ENCODE measurements at regions of chr6 and their contacts with region 1.

Region 1: GRCh38 chr6:108798670-108799353 is 49.4 kb upstream of the ARMC2 start:
- DNase-seq: peak in 4 of 5 donors; percentile 37 to 71 (median 50)
- ATAC-seq: peak; percentile 40 to 76 (median 72)
- H3K4me3 ChIP-seq: no peak overlapping the region
- H3K27ac ChIP-seq: peak overlapping the region in 1 of 12 donors; percentile 54
- H3K4me1 ChIP-seq: peaks cover 0 to 47% (median 12%) of the 10 kb centered on the region in 12 donors
- H3K27me3 ChIP-seq: no peaks in the 10 kb centered on the region
- CTCF ChIP-seq: no peak
- POLR2A ChIP-seq: no peak

Region 2: DNA sequence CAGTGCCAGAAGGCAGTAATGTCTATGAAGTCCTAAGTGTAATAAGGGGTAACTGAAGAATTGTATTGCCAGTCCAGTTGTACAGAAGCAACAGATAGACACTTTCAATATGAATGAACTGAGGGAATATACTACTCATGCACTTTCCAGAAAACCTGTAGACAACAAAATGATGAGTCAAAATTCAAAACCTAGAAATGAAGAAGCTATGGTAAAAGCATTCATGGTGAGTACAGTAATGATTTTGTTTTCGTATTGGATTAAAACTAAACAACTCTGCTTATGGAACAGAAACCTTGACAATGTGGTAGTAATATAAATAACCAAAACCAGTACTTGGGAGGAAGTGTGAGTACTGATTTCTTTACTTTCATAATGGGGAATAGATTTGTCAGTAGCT is 84.4 kb after region 1 on chr6:
- intact Hi-C with region 1: loop called in 1 of 10 experiments (anchors 10 kb)
- DNase-seq: no peak
- ATAC-seq: no peak
- H3K4me3 ChIP-seq: no peak overlapping the region
- H3K27ac ChIP-seq: peak overlapping the region in 1 of 12 donors; percentile 42
- H3K4me1 ChIP-seq: peaks cover 0 to 21% (median 7%) of the 10 kb centered on the region in 12 donors
- H3K27me3 ChIP-seq: no peaks in the 10 kb centered on the region
- CTCF ChIP-seq: no peak
- POLR2A ChIP-seq: no peak

Region 3: DNA sequence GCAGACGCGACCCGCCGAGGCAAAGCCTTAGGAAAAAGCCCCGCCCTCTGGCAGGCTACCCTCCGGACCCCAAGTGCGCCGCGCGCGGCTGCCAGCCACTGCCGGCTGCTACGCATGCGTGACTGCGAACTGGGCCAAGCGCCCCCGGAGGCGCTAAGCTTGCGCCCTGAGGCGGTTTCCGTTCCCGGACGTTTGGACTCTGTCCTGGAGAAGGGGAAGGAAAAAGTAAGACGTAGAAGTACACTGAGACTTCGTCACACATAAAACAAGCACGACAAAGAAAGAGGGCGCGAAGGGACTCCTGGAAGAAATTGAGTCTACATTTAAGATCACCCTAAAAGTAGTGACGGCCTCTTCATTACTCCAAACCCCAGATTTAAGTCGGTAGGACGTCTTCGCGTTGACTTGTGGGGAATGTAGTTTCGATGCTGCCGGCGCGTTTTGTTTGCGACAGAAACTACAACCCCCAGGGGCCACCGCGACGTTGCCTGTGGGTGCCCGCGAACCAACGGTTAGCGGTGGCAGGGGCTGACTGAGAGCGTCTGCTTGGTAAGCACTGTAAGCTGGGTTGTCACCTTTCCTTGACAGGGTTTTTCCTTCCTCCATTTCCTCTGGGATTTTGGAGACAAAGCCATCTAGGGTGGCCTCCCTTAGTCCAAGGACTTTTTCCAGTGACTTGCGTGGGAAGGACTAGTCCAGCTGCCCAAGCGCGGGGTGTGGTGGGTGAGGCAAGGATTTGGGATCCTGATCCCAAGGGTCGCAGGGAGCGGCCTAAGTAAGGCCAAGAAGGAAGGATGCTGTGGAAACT is 296.4 kb after region 1 on chr6 and contains the start of gene CEP57L1:
- intact Hi-C with region 1: no loop called
- DNase-seq: peak; percentile 98 to 99 (median 99)
- ATAC-seq: peak; percentile 77 to 90 (median 84)
- H3K4me3 ChIP-seq: peak within 1 kb of the TSS; percentile 51 to 88 (median 66)
- H3K27ac ChIP-seq: peak within 1 kb of the TSS; percentile 95 to 100 (median 98)
- H3K4me1 ChIP-seq: peaks cover 0 to 45% (median 22%) of the 10 kb centered on the region in 12 donors
- H3K27me3 ChIP-seq: no peaks in the 10 kb centered on the region
- CTCF ChIP-seq: peak in 2 of 12 donors; percentile 8 to 33
- POLR2A ChIP-seq: peak; percentile 7 to 26
- total RNA-seq, gene CEP57L1: 5.9 to 13.8 (median 10.3) TPM